MCF 10A (cell line): ENCODE measurements at regions of chr20 and their contacts with region 1.

Region 1: GRCh38 chr20:3224681-3225421 is 14.1 kb downstream of the SLC4A11 start:
- DNase-seq: no peak
- H3K4me3 Mint-ChIP-seq: no peak overlapping the region
- H3K27ac Mint-ChIP-seq: no peak overlapping the region
- H3K4me1 Mint-ChIP-seq: peaks cover 4% of the 10 kb centered on the region
- H3K27me3 Mint-ChIP-seq: no peaks in the 10 kb centered on the region
- CTCF ChIP-seq: no peak

Region 2: DNA sequence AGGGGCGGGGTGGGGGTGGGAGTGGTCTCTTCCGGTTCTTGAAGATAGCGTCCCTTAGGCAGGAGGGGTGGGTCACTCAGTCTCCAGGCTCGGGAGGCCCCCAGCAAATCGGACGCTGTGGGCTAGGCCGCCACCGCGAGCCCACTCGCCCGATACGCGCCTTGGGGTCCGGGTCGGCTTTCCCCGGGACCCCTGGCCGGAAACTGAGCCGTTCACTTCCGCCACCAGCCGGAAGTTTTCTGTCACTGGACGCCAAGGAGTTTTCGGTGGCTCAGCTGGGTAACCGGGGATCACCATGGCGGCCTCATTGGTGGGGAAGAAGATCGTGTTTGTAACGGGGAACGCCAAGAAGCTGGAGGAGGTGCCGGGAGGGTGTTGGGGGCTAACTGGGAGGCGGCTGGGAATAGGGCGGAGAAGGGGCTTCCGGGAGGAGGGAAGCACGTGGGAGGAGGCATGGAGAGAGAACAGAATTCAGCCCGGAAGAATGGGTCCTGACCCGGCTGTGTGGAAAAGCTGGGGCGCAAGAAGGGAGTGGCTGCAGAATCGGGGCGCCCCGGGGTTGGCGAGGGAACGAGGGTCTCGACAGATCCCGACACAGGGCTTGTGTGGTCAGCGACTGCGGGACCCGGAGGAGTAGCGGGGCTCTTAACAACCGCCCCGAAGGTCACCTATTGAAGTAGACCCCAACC is 15.4 kb before region 1 on chr20 and contains the start of gene ITPA:
- CTCF ChIA-PET with region 1: interaction called, 37 read pairs
- POLR2A ChIA-PET with region 1: interaction called, 14 read pairs
- intact Hi-C with region 1: no loop called
- DNase-seq: peak; percentile 49
- H3K4me3 Mint-ChIP-seq: peak within 1 kb of the TSS; percentile 100
- H3K27ac Mint-ChIP-seq: peak within 1 kb of the TSS; percentile 99
- H3K4me1 Mint-ChIP-seq: no peaks in the 10 kb centered on the region
- H3K27me3 Mint-ChIP-seq: no peaks in the 10 kb centered on the region
- CTCF ChIP-seq: no peak
- total RNA-seq, gene ITPA: 69.4 and 97.1 TPM in 2 replicates